H1 (cell line): ENCODE measurements at regions of chr9 and their contacts with region 1.

Region 1: DNA sequence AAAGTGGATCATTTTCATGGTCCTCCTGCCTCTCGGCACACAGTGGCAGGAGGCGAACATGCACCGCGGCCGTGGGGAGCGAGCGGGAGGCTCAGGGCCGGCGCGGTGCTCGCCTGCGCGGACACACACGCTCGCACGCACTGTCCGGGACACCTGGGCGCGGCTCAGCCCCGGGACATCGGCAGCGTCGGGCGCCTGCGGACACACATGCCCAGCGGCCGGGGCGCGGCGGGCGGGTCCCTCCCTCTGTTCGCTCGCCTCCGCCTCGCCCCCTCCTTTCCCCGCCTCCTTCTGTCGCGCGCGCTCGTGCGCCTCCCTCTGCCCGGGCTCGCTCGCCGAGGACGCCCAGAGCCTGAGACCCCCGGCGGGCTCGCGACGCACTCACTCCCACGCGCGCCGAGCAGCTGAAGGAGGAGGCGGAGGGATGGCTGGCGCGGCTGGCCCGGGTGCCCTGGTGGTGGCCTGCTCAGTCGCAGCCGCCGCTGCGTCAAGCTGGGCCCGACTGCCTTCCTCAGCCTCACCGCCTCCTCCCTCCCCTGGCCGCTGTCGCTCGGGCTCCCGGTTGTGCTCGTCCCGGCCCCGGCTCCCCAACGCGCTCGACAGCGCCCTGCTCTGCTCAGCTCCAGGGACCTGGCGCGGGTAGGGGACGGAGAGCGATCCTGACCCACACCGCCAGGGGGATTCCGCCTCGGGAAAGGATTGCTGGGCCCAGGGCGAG is at the start of gene FRMD3:
- DNase-seq: peak; percentile 38 to 82
- H3K4me3 ChIP-seq: peak within 1 kb of the TSS; percentile 41 to 69 (median 47)
- H3K27ac ChIP-seq: no peak within 1 kb of the TSS
- H3K4me1 ChIP-seq: peaks cover 0 to 10% (median 4%) of the 10 kb centered on the region in 4 experiments; a peak in 6 of 7 replicates
- H3K27me3 ChIP-seq: peaks cover 20 to 51% (median 40%) of the 10 kb centered on the region in 4 experiments
- CTCF ChIP-seq: peak; percentile 68 to 82 (median 72)
- EP300 ChIP-seq: no peak
- POLR2A ChIP-seq: no peak
- RAD21 ChIP-seq: peak; percentile 33 to 58; a peak in 3 of 4 replicates
- total RNA-seq, gene FRMD3: 1.3 and 1.4 TPM in 2 replicates

Region 2: GRCh38 chr9:83554278-83554677 is 15.9 kb after region 1 on chr9:
- CTCF ChIA-PET with region 1: interaction called, 42 read pairs
- POLR2A ChIA-PET with region 1: no interaction called
- DNase-seq: no peak
- H3K4me3 ChIP-seq: no peak overlapping the region
- H3K27ac ChIP-seq: no peak overlapping the region
- H3K4me1 ChIP-seq: no peaks in the 10 kb centered on the region
- H3K27me3 ChIP-seq: no peaks in the 10 kb centered on the region
- CTCF ChIP-seq: no peak
- EP300 ChIP-seq: no peak
- POLR2A ChIP-seq: no peak
- RAD21 ChIP-seq: no peak